Activated B cell treated with CpG ODN at 0.5 μM for 24 hours (primary cell): ENCODE measurements at regions of chr7 and their contacts with region 1.

Region 1: DNA sequence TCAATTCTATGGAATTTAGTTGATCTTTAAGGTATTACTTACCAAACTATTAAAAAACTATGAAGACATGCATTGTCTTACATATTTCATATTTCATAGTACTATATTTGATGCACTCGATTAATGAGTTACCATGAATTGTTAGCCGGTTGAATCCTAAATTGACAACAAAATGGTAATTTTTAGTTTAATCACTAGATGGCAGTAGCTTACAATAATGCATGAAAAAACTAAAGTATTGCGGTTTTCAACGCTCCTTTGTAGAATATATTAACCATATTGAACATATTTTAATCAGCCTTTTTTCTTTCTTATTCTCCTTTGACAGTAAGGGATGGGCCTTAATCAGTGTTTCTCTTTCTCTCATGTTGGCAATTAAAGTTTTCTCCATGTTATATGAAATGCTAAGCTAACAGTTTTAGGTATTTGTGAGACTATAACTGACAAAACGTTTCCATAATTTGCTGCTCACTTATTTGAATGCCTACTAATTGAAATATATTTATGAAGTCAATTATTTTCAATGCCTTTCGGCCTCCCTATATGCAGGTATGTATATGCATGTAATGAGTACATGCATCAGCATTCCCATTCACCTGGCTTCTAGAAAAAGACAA is 48.5 kb upstream of the ARL4A start:
- DNase-seq: no peak
- ATAC-seq: peak; percentile 55
- H3K4me3 Mint-ChIP-seq: no peak overlapping the region
- H3K27ac Mint-ChIP-seq: no peak overlapping the region
- H3K4me1 Mint-ChIP-seq: peaks cover 27% of the 10 kb centered on the region
- H3K27me3 Mint-ChIP-seq: no peaks in the 10 kb centered on the region
- CTCF ChIP-seq: peak; percentile 77

Region 2: GRCh38 chr7:11427686-11428273 is 1211.2 kb before region 1 on chr7:
- CTCF ChIA-PET with region 1: no interaction called
- POLR2A ChIA-PET with region 1: no interaction called
- intact Hi-C with region 1: loop called (anchors 5 kb)
- DNase-seq: no peak
- ATAC-seq: no peak
- H3K4me3 Mint-ChIP-seq: no peak overlapping the region
- H3K27ac Mint-ChIP-seq: no peak overlapping the region
- H3K4me1 Mint-ChIP-seq: no peaks in the 10 kb centered on the region
- H3K27me3 Mint-ChIP-seq: no peaks in the 10 kb centered on the region
- CTCF ChIP-seq: no peak

Region 3: DNA sequence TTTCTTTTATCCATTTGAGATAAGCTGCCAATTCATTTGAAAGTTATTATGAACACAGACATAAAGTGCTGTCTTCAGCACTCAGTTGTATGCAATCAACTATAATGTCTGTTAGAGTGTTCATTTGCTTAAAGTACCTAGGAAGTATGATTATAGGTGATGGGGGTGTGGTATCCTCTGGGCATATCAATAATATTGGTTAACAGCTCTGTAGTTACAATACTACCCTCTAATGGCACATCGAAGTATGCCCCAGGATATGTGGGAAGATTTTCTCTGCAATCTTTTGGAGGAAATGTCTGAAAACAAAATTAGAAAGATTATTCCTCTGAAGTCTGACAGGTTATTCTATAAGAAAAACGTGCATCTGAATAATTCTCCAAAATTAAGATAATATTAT is 478.1 kb after region 1 on chr7:
- CTCF ChIA-PET with region 1: no interaction called
- POLR2A ChIA-PET with region 1: no interaction called
- intact Hi-C with region 1: loop called (anchors 1 kb)
- DNase-seq: no peak
- ATAC-seq: no peak
- H3K4me3 Mint-ChIP-seq: no peak overlapping the region
- H3K27ac Mint-ChIP-seq: no peak overlapping the region
- H3K4me1 Mint-ChIP-seq: no peaks in the 10 kb centered on the region
- H3K27me3 Mint-ChIP-seq: no peaks in the 10 kb centered on the region
- CTCF ChIP-seq: no peak

Region 4: GRCh38 chr7:13262929-13263530 is 624.1 kb after region 1 on chr7:
- CTCF ChIA-PET with region 1: interaction called, 16 read pairs
- POLR2A ChIA-PET with region 1: no interaction called
- intact Hi-C with region 1: loop called (anchors 1 kb)
- DNase-seq: no peak
- ATAC-seq: no peak
- H3K4me3 Mint-ChIP-seq: no peak overlapping the region
- H3K27ac Mint-ChIP-seq: no peak overlapping the region
- H3K4me1 Mint-ChIP-seq: no peaks in the 10 kb centered on the region
- H3K27me3 Mint-ChIP-seq: peaks cover 3% of the 10 kb centered on the region
- CTCF ChIP-seq: peak; percentile 38

Region 5: GRCh38 chr7:14457568-14458453 is 1818.9 kb after region 1 on chr7:
- CTCF ChIA-PET with region 1: no interaction called
- POLR2A ChIA-PET with region 1: no interaction called
- intact Hi-C with region 1: loop called (anchors 2 kb)
- DNase-seq: no peak
- ATAC-seq: no peak
- H3K4me3 Mint-ChIP-seq: no peak overlapping the region
- H3K27ac Mint-ChIP-seq: no peak overlapping the region
- H3K4me1 Mint-ChIP-seq: no peaks in the 10 kb centered on the region
- H3K27me3 Mint-ChIP-seq: no peaks in the 10 kb centered on the region
- CTCF ChIP-seq: no peak